ENCODE measurements at regions of chr2 and their contacts with region 1.

Region 1: DNA sequence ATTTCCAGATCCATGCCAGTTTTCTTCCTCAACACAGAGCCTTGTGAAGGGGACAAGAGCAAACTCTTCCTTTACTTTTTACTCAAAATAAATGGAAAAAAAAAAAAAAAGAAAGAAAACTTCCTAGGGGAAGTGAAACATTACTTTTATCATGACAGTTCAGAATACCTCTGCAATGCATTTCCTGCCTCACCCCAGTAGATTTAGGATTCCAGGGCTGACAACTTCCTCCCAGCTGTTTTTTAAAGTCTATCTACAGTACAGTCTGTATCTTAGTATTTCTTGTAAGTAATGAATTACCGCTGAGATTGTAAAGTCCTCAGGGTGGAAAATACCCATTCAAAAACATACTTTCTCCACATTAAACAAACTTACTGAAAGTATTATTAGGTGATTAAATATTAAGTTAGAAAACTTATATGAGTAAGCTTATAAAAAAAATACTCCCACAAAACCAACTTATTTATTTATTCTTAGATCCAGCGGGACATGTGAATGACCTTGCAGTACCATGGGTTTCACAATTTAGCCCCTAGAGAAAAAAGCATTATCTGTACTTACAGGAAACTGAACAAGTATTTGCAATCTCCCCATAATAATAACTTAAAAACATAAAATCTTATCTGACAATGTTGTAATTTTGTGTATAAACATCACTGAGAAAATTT is 117.7 kb downstream of the RBMS1 start:
- DNase-seq: peak; percentile 57
- H3K4me3 Mint-ChIP-seq: peak overlapping the region; percentile 12
- H3K27ac Mint-ChIP-seq: peak overlapping the region; percentile 85
- H3K4me1 Mint-ChIP-seq: peaks cover 63% of the 10 kb centered on the region
- H3K27me3 Mint-ChIP-seq: no peaks in the 10 kb centered on the region
- CTCF ChIP-seq: no peak

Region 2: GRCh38 chr2:160194946-160195345 is 181.0 kb before region 1 on chr2:
- CTCF ChIA-PET with region 1: no interaction called
- POLR2A ChIA-PET with region 1: no interaction called
- intact Hi-C with region 1: no loop called
- DNase-seq: no peak
- H3K4me3 Mint-ChIP-seq: no peak overlapping the region
- H3K27ac Mint-ChIP-seq: no peak overlapping the region
- H3K4me1 Mint-ChIP-seq: peaks cover 23% of the 10 kb centered on the region
- H3K27me3 Mint-ChIP-seq: no peaks in the 10 kb centered on the region
- CTCF ChIP-seq: no peak

Region 3: DNA sequence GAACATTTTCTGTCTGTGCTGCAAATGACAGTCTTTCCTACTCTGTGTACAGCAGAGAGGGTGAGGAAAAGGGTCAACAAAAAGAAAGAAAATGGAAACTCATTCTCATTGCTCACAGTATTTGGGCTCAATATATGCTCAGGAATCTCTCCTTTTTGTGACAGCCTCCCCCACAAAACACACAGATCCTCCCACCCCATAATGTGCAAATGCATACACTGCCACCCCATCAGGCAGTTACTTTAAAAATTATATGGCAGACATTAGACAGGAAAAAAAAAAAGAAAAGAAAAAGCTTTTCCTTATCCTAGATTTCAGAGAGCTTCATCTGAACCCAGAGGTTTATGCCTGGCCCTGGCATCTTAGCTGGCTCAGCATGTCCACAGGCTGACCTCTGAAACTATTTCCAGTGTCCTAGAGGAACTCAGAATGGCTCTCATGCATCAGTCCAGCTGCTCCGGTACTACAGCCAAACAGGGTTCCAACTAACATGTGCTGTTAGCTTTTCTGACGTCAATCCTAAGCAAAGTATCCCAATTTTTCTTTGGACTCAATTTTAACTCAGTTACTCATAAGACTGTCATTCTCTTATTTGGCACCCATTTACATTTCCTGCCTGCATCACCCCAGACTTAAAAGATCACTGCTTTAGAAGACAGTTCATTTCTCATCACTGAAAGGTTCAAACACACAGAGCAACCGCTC is 11.8 kb after region 1 on chr2:
- CTCF ChIA-PET with region 1: interaction called, 4 read pairs
- POLR2A ChIA-PET with region 1: interaction called, 16 read pairs
- intact Hi-C with region 1: no loop called
- DNase-seq: peak; percentile 92
- H3K4me3 Mint-ChIP-seq: peak overlapping the region; percentile 43
- H3K27ac Mint-ChIP-seq: peak overlapping the region; percentile 80
- H3K4me1 Mint-ChIP-seq: peaks cover 47% of the 10 kb centered on the region
- H3K27me3 Mint-ChIP-seq: no peaks in the 10 kb centered on the region
- CTCF ChIP-seq: no peak

Measured in MCF 10A (cell line).